ENCODE measurements at regions of chr6 and their contacts with region 1.

Region 1: DNA sequence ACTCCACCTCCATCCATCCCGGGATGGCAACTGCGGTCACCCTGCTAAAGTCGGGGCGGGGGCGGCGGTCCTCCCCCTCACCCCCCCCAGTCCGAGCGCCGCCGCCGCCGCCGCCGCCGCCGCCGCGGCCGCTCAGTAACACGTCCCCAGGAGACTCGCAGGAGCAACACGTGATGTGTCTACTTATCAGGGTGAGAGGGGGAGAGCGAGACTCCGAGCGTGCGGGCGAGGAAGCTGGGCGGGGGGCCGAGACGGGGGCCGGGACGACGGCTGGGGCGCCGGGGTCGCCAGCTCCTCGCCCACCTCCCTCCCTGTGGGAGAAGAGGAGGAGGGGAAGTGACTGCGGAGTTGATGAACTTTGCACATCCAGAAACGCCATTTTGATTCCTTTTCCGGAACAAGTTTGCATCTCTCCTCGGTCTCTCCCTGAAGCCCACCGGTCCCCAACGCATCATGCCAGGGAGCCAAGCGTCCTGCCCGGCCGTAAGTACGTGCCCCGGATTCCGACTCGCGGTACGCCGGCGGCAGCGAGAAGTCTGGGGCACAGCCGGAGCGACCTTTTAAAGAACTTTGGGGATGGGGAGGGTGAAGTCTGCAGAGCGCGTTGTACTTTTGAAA is at the start of gene RREB1:
- DNase-seq: peak; percentile 72
- ATAC-seq: peak; percentile 66
- H3K4me3 Mint-ChIP-seq: peak within 1 kb of the TSS; percentile 93
- H3K27ac Mint-ChIP-seq: peak within 1 kb of the TSS; percentile 94
- H3K4me1 Mint-ChIP-seq: peaks cover 40% of the 10 kb centered on the region
- H3K27me3 Mint-ChIP-seq: no peaks in the 10 kb centered on the region
- total RNA-seq, gene RREB1: 27.5 to 29.0 TPM

Region 2: GRCh38 chr6:6875814-6876470 is 231.7 kb before region 1 on chr6:
- CTCF ChIA-PET with region 1: no interaction called
- POLR2A ChIA-PET with region 1: no interaction called
- DNase-seq: no peak
- ATAC-seq: no peak
- H3K4me3 Mint-ChIP-seq: no peak overlapping the region
- H3K27ac Mint-ChIP-seq: no peak overlapping the region
- H3K4me1 Mint-ChIP-seq: no peaks in the 10 kb centered on the region
- H3K27me3 Mint-ChIP-seq: peaks cover 4% of the 10 kb centered on the region

Region 3: GRCh38 chr6:7086488-7086887 is 21.2 kb before region 1 on chr6:
- CTCF ChIA-PET with region 1: interaction called, 39 read pairs
- POLR2A ChIA-PET with region 1: interaction called, 5 read pairs
- DNase-seq: peak; percentile 47
- ATAC-seq: peak; percentile 67
- H3K4me3 Mint-ChIP-seq: peak overlapping the region; percentile 57
- H3K27ac Mint-ChIP-seq: peak overlapping the region; percentile 37
- H3K4me1 Mint-ChIP-seq: peaks cover 32% of the 10 kb centered on the region
- H3K27me3 Mint-ChIP-seq: peaks cover 16% of the 10 kb centered on the region

Region 4: DNA sequence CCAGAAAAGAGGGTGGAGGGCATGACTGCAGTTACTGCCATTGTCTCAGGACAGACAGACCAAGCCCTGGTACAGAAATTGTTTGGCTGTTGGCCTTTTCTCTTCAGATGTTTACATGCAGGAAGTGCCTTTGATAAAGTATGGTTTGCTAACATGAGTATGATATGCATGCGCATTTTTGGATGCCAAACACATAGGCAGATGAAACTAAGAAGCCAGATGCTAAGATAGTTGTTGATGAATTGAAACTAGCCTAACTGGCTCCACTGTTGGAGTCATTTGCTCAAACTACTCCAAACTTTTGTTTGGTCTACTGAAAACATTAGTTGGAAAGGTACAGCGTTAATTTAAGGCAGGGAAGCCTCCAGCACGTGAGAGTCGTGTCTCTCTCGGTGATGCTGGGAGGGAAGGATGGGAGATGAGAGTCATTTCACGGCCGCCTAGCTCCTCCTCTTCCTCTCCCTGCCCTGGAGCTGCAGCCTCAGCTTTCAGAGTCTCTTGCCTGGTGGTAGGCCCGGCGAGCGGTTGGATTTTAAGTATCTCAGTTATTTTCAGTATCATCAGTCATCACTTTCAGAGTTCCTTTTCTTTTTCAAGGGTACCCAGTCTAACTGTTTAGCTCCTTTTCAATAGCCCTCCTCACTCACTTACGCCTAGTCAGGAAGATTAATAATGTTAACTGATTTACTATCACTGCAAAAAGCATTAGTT is 29.8 kb after region 1 on chr6:
- CTCF ChIA-PET with region 1: interaction called, 9 read pairs
- POLR2A ChIA-PET with region 1: interaction called, 52 read pairs
- DNase-seq: peak; percentile 78
- ATAC-seq: peak; percentile 71
- H3K4me3 Mint-ChIP-seq: peak overlapping the region; percentile 76
- H3K27ac Mint-ChIP-seq: peak overlapping the region; percentile 92
- H3K4me1 Mint-ChIP-seq: peaks cover 74% of the 10 kb centered on the region
- H3K27me3 Mint-ChIP-seq: no peaks in the 10 kb centered on the region

Region 5: GRCh38 chr6:7145885-7146828 is 38.5 kb after region 1 on chr6:
- CTCF ChIA-PET with region 1: interaction called, 10 read pairs
- POLR2A ChIA-PET with region 1: interaction called, 4 read pairs
- DNase-seq: peak; percentile 39
- ATAC-seq: peak; percentile 83
- H3K4me3 Mint-ChIP-seq: peak overlapping the region; percentile 52
- H3K27ac Mint-ChIP-seq: peak overlapping the region; percentile 89
- H3K4me1 Mint-ChIP-seq: peaks cover 47% of the 10 kb centered on the region
- H3K27me3 Mint-ChIP-seq: no peaks in the 10 kb centered on the region

Measured in activated CD8-positive, alpha-beta T cell treated with anti-CD3 and anti-CD28 coated beads, Interleukin-2, amount 10 ng/mL, durations not matched to agents 7 days and 5 days (primary cell).